ENCODE measurements at regions of chr5 and their contacts with region 1.

Region 1: GRCh38 chr5:58886315-58887207 is 303.7 kb downstream of the RAB3C start:
- DNase-seq: peak; percentile 21 to 77 (median 58)
- ATAC-seq: peak; percentile 79
- H3K4me3 ChIP-seq: no peak overlapping the region
- H3K4me3 Mint-ChIP-seq: no peak overlapping the region
- H3K27ac ChIP-seq: no peak overlapping the region
- H3K27ac Mint-ChIP-seq: no peak overlapping the region
- H3K4me1 ChIP-seq: no peaks in the 10 kb centered on the region
- H3K4me1 Mint-ChIP-seq: peaks cover 16% of the 10 kb centered on the region
- H3K27me3 ChIP-seq: no peaks in the 10 kb centered on the region
- H3K27me3 Mint-ChIP-seq: peaks cover 9% of the 10 kb centered on the region
- CTCF ChIP-seq: peak; percentile 84

Region 2: GRCh38 chr5:58902765-58903164 is 16.2 kb after region 1 on chr5:
- CTCF ChIA-PET with region 1: interaction called, 13 read pairs
- POLR2A ChIA-PET with region 1: no interaction called
- intact Hi-C with region 1: no loop called
- DNase-seq: no peak
- ATAC-seq: no peak
- H3K4me3 ChIP-seq: no peak overlapping the region
- H3K4me3 Mint-ChIP-seq: no peak overlapping the region
- H3K27ac ChIP-seq: no peak overlapping the region
- H3K27ac Mint-ChIP-seq: no peak overlapping the region
- H3K4me1 ChIP-seq: no peaks in the 10 kb centered on the region
- H3K4me1 Mint-ChIP-seq: no peaks in the 10 kb centered on the region
- H3K27me3 ChIP-seq: no peaks in the 10 kb centered on the region
- H3K27me3 Mint-ChIP-seq: no peaks in the 10 kb centered on the region
- CTCF ChIP-seq: no peak

Region 3: GRCh38 chr5:59007460-59008063 is 121.0 kb after region 1 on chr5:
- CTCF ChIA-PET with region 1: interaction called, 12 read pairs
- POLR2A ChIA-PET with region 1: interaction called, 3 read pairs
- intact Hi-C with region 1: loop called in 1 of 2 experiments (anchors 1 kb)
- DNase-seq: peak in 2 of 9 experiments; percentile 16 to 32
- ATAC-seq: no peak
- H3K4me3 ChIP-seq: no peak overlapping the region
- H3K4me3 Mint-ChIP-seq: no peak overlapping the region
- H3K27ac ChIP-seq: no peak overlapping the region
- H3K27ac Mint-ChIP-seq: no peak overlapping the region
- H3K4me1 ChIP-seq: peaks cover 5% of the 10 kb centered on the region
- H3K4me1 Mint-ChIP-seq: peaks cover 63% of the 10 kb centered on the region
- H3K27me3 ChIP-seq: no peaks in the 10 kb centered on the region
- H3K27me3 Mint-ChIP-seq: no peaks in the 10 kb centered on the region
- CTCF ChIP-seq: peak; percentile 51

Region 4: DNA sequence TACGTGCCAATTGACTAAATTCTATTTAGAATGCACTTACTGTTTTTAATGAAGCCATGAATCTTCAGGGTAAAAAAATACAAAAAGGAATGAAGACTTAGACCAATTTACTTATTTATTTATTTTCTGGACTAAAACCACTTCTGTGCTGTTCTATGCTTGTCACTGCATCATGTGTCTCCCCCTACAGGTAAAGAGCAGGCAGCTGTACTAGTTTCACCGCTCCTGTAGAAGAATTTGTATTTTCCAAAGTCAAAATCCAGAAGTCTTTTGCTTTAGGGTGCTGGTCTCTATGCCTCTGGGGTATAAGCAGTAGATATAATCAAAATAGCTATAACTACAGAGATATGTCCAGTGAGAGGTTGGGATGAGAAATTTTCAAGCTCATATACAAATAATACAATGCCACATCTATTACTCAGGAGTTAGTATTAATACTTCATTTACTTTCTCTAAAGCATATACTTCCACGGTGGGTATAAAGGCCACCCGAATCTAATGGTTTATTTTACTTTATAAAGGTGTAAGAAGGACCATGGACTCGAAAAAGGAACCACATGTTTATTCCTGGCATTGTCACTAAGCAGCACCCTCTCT is 287.8 kb after region 1 on chr5:
- CTCF ChIA-PET with region 1: interaction called, 123 read pairs
- POLR2A ChIA-PET with region 1: no interaction called
- intact Hi-C with region 1: loop called (anchors 1 kb)
- DNase-seq: peak in 6 of 9 experiments; percentile 8 to 81 (median 30)
- ATAC-seq: peak; percentile 80
- H3K4me3 ChIP-seq: no peak overlapping the region
- H3K4me3 Mint-ChIP-seq: no peak overlapping the region
- H3K27ac ChIP-seq: no peak overlapping the region
- H3K27ac Mint-ChIP-seq: no peak overlapping the region
- H3K4me1 ChIP-seq: no peaks in the 10 kb centered on the region
- H3K4me1 Mint-ChIP-seq: no peaks in the 10 kb centered on the region
- H3K27me3 ChIP-seq: no peaks in the 10 kb centered on the region
- H3K27me3 Mint-ChIP-seq: no peaks in the 10 kb centered on the region
- CTCF ChIP-seq: peak; percentile 87

Region 5: GRCh38 chr5:59380350-59380951 is 493.9 kb after region 1 on chr5:
- CTCF ChIA-PET with region 1: interaction called, 4 read pairs
- POLR2A ChIA-PET with region 1: no interaction called
- intact Hi-C with region 1: loop called in 1 of 2 experiments (anchors 1 kb)
- DNase-seq: peak in 2 of 9 experiments; percentile 57 to 67
- ATAC-seq: peak; percentile 54
- H3K4me3 ChIP-seq: no peak overlapping the region
- H3K4me3 Mint-ChIP-seq: no peak overlapping the region
- H3K27ac ChIP-seq: no peak overlapping the region
- H3K27ac Mint-ChIP-seq: no peak overlapping the region
- H3K4me1 ChIP-seq: no peaks in the 10 kb centered on the region
- H3K4me1 Mint-ChIP-seq: peaks cover 2% of the 10 kb centered on the region
- H3K27me3 ChIP-seq: no peaks in the 10 kb centered on the region
- H3K27me3 Mint-ChIP-seq: no peaks in the 10 kb centered on the region
- CTCF ChIP-seq: peak; percentile 50

Region 6: DNA sequence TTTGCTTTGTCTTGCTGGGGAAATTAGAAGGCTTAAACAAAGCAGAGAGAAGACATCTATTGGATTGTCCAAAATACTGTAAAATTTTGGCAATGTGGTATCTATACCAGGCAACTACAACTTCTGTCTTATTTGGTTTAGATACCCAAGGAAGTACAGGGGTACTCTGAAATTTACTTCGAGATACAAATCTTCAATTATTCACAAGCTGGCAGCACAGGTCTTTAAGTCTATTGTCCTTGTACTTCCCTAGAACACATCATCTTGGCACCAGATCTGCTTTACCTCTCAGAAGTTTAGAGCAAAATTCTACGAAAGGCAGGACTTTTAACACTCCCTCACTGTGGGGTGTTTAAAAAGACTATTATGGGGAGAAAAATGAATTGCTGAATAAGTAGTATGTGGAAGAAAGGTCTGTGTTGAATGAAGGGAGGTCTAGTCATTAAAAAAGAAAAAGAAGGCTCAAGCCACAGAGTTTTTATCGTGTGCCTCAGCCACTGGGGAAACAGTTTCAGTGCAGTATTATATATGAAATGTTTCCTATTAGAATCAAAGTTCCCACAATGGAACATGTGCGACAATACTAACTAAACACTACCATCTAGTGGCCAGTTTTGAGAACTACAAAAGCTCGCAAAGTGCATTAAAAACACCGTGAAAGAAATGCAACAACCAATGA is 913.2 kb after region 1 on chr5:
- CTCF ChIA-PET with region 1: no interaction called
- POLR2A ChIA-PET with region 1: no interaction called
- intact Hi-C with region 1: loop called (anchors 2 to 5 kb)
- DNase-seq: peak in 3 of 9 experiments; percentile 8 to 61 (median 45)
- ATAC-seq: peak; percentile 62
- H3K4me3 ChIP-seq: no peak overlapping the region
- H3K4me3 Mint-ChIP-seq: no peak overlapping the region
- H3K27ac ChIP-seq: no peak overlapping the region
- H3K27ac Mint-ChIP-seq: no peak overlapping the region
- H3K4me1 ChIP-seq: no peaks in the 10 kb centered on the region
- H3K4me1 Mint-ChIP-seq: no peaks in the 10 kb centered on the region
- H3K27me3 ChIP-seq: no peaks in the 10 kb centered on the region
- H3K27me3 Mint-ChIP-seq: peaks cover 2% of the 10 kb centered on the region
- CTCF ChIP-seq: peak; percentile 75